ENCODE measurements at regions of chr6 and their contacts with region 1.

Region 1: GRCh38 chr6:132300323-132300949 is 100.8 kb downstream of the MOXD1 start:
- DNase-seq: peak; percentile 41
- ATAC-seq: peak; percentile 92
- H3K4me3 Mint-ChIP-seq: no peak overlapping the region
- H3K27ac Mint-ChIP-seq: no peak overlapping the region
- H3K4me1 Mint-ChIP-seq: no peaks in the 10 kb centered on the region
- H3K27me3 Mint-ChIP-seq: no peaks in the 10 kb centered on the region
- CTCF ChIP-seq: peak; percentile 55

Region 2: GRCh38 chr6:132268209-132268608 is 32.2 kb before region 1 on chr6:
- CTCF ChIA-PET with region 1: no interaction called
- POLR2A ChIA-PET with region 1: no interaction called
- DNase-seq: no peak
- ATAC-seq: no peak
- H3K4me3 Mint-ChIP-seq: no peak overlapping the region
- H3K27ac Mint-ChIP-seq: no peak overlapping the region
- H3K4me1 Mint-ChIP-seq: peaks cover 10% of the 10 kb centered on the region
- H3K27me3 Mint-ChIP-seq: peaks cover 17% of the 10 kb centered on the region; the same call in 1 of the 2 replicates
- CTCF ChIP-seq: no peak

Region 3: DNA sequence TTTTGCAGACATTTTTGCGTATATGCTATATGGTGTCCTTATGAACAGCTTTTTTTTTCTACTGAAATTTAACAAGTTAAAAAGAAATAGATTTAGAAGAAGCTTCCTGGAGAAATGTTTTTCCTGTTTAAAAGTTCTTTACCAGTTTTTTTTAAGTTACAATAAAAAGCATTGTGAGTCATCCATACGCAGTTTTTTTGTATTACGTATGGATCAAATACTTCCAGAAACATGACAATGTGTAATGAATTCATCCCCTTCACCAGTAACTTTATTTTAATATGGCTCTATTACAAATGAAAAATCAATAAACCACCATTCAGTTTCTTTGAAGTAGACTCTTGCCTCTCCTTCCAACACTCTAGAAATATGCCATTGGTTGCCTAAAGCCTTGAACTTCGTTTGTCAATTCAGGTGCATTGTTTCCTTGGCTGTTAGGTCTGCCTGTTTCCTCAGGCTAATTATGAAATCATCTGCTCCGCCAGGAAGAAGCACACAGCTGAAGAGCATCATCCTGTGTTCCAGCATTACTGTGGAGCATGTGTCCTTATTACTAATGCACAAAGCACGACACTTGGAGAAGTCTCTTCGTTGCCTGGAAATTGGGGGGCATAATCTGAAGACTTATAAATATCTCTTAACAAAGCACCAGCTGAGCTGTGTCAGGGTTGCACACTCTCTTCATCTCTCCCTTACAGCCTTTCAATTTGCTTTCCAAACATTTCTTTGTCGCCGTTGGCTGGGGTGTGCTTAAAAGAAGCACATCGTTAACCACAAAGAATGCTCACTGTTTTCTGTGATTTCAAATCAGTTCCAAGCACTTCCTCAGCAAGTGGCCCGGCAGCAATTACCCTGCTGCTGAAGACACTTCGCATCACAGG is 91.2 kb after region 1 on chr6:
- CTCF ChIA-PET with region 1: interaction called, 21 read pairs
- POLR2A ChIA-PET with region 1: no interaction called
- DNase-seq: no peak
- ATAC-seq: peak; percentile 24
- H3K4me3 Mint-ChIP-seq: no peak overlapping the region
- H3K27ac Mint-ChIP-seq: 0 out of 2 replicates have a peak overlapping the region, but pooled peaks have one; percentile 11
- H3K4me1 Mint-ChIP-seq: peaks cover 20% of the 10 kb centered on the region
- H3K27me3 Mint-ChIP-seq: peaks cover 8% of the 10 kb centered on the region
- CTCF ChIP-seq: no peak

Region 4: DNA sequence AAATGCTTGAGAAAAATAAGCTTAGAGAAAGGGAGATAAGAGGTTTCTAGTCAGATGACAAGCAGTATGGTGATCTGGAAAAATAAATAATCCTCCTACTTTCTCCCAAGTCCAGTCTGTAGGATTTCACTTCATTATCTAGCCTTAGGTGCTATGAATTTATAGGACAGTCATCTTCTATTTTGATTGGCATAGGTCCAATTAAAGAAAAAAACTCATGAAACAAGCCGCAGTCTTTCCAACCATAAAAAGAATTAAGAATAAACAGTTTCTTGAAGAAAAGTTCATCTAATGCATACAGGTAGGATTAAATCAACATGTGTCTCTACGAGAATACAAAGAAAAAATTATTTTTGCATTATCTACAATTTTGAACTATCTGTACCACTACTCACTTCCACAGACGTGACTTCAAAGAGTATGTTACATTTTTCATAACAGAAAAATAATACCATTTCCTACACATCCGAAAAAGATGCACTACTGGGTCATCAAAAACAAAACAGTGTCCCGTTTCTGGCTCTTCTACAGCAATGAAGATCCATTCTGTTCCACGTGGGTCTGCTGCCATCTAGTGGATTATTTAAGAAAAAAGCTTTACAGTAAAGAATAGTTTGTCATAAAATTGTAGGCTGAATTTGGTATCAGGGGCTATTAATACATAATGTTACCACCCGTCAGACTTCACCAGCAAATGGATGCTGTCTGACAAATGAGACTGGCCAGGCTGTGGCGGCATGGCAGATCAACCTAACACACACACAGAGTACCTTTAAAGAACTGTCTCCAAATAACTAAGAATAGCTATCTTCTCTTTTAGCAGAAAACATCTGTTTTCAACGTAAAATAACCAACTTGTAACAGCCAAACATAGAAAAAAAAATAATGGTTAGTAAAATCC is 183.6 kb after region 1 on chr6:
- CTCF ChIA-PET with region 1: interaction called, 11 read pairs
- POLR2A ChIA-PET with region 1: no interaction called
- DNase-seq: no peak
- ATAC-seq: peak; percentile 70
- H3K4me3 Mint-ChIP-seq: no peak overlapping the region
- H3K27ac Mint-ChIP-seq: no peak overlapping the region
- H3K4me1 Mint-ChIP-seq: no peaks in the 10 kb centered on the region
- H3K27me3 Mint-ChIP-seq: no peaks in the 10 kb centered on the region
- CTCF ChIP-seq: peak; percentile 63